Activated CD4-positive, alpha-beta T cell treated with anti-CD3 and anti-CD28 coated beads for 36 hours (primary cell): ENCODE measurements at regions of chr14 and their contacts with region 1.

Region 1: DNA sequence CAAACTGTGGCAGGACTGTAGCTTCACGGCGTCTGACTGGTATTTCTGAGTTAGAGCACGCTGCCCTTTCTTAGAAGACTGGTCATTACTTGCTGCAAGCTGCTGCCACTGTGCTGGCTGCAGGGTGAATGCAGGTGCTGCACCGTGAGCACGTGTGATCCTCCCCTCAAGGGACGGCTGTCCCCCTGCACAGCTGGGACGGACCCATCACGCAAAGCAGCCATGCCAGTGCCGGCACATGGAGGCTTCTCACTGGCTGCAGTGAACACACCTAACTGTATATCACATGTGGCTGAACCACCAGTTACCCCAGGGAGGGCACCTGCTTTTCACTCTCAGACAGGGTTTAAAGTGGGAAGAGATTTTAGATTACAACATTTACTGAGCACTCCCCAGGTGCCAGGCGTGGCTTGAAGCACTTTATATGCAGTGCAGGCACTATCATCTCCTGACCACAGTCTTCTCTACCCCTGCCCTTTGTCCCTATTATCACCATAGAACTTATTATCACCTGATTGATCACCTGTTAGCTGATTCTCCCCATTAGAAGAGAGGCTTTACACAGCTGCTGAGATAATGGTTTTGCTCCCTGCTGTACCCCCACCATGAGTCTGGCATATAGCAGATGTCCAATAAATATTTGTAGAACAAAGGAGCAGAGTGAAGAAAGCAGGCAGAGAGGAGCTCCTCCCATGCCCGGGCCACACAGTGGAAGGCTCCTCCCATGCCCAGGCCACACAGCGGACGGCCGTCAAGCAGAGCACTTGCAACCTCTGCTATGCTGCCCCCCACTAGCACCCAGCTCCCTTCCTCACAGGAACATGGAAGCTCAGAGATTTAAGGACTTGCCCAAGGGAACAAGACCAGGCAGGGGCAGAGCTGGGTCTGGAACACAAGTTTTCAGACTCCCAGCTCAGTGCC is 25.9 kb downstream of the SLC25A47 start:
- DNase-seq: no peak
- ATAC-seq: no peak
- H3K4me3 Mint-ChIP-seq: no peak overlapping the region
- H3K27ac Mint-ChIP-seq: no peak overlapping the region
- H3K4me1 Mint-ChIP-seq: peaks cover 5% of the 10 kb centered on the region
- H3K27me3 Mint-ChIP-seq: no peaks in the 10 kb centered on the region

Region 2: GRCh38 chr14:100362311-100362927 is 13.4 kb after region 1 on chr14:
- CTCF ChIA-PET with region 1: interaction called, 4 read pairs
- POLR2A ChIA-PET with region 1: interaction called, 7 read pairs
- intact Hi-C with region 1: loop called in 1 of 2 experiments (anchors 2 kb)
- DNase-seq: no peak
- ATAC-seq: no peak
- H3K4me3 Mint-ChIP-seq: no peak overlapping the region
- H3K27ac Mint-ChIP-seq: no peak overlapping the region
- H3K4me1 Mint-ChIP-seq: peaks cover 37% of the 10 kb centered on the region
- H3K27me3 Mint-ChIP-seq: no peaks in the 10 kb centered on the region

Region 3: GRCh38 chr14:100369019-100369418 is 20.0 kb after region 1 on chr14:
- CTCF ChIA-PET with region 1: interaction called, 4 read pairs
- POLR2A ChIA-PET with region 1: interaction called, 5 read pairs
- intact Hi-C with region 1: loop called in 1 of 2 experiments (anchors 2 kb)
- DNase-seq: peak; percentile 39
- ATAC-seq: no peak
- H3K4me3 Mint-ChIP-seq: no peak overlapping the region
- H3K27ac Mint-ChIP-seq: peak overlapping the region; percentile 69
- H3K4me1 Mint-ChIP-seq: peaks cover 68% of the 10 kb centered on the region
- H3K27me3 Mint-ChIP-seq: no peaks in the 10 kb centered on the region